ENCODE measurements at regions of chr7 and their contacts with region 1.

Region 1: DNA sequence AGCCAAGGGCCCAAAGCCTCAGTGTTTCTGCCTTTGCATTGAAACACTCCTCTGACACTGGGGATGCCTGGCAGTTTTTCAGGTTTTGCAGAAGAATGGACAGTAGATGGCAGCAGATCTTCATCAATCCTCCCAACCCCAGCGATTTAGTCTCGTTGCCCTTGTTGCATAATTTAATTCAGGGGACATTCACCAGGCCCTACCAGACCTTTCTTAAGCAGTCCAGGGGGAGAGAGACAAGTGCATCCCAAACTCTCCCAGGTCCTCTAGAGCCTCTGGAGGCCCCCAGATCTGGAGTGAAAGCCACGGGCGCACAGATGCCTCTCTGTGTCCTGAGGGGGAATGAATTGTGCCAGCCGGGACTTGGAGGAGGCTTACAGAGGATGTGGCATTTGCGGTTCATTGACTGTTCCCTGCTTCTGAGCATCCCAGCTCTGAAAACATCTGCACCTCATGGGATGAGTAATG is 29.6 kb downstream of the MINDY4 start:
- DNase-seq: peak in 1 of 2 donors; percentile 25
- ATAC-seq: peak; percentile 72 to 93 (median 80)
- H3K4me3 ChIP-seq: no peak overlapping the region
- H3K27ac ChIP-seq: no peak overlapping the region
- H3K4me1 ChIP-seq: peaks cover 25% of the 10 kb centered on the region
- H3K27me3 ChIP-seq: no peaks in the 10 kb centered on the region
- CTCF ChIP-seq: peak; percentile 73

Region 2: GRCh38 chr7:30931161-30931928 is 130.5 kb after region 1 on chr7:
- intact Hi-C with region 1: loop called in 1 of 2 experiments (anchors 5 kb)
- DNase-seq: peak; percentile 54 to 70
- ATAC-seq: peak; percentile 71 to 85 (median 78)
- H3K4me3 ChIP-seq: peak overlapping the region; percentile 27
- H3K27ac ChIP-seq: peak overlapping the region; percentile 36
- H3K4me1 ChIP-seq: peaks cover 19% of the 10 kb centered on the region
- H3K27me3 ChIP-seq: no peaks in the 10 kb centered on the region
- CTCF ChIP-seq: no peak

Region 3: GRCh38 chr7:30974605-30975255 is 173.9 kb after region 1 on chr7:
- intact Hi-C with region 1: loop called (anchors 1 to 5 kb)
- DNase-seq: peak in 1 of 2 donors; percentile 46
- ATAC-seq: peak; percentile 73 to 81 (median 74)
- H3K4me3 ChIP-seq: no peak overlapping the region
- H3K27ac ChIP-seq: no peak overlapping the region
- H3K4me1 ChIP-seq: no peaks in the 10 kb centered on the region
- H3K27me3 ChIP-seq: peaks cover 0 to 6% (median 3%) of the 10 kb centered on the region in 3 donors
- CTCF ChIP-seq: peak; percentile 60

Region 4: DNA sequence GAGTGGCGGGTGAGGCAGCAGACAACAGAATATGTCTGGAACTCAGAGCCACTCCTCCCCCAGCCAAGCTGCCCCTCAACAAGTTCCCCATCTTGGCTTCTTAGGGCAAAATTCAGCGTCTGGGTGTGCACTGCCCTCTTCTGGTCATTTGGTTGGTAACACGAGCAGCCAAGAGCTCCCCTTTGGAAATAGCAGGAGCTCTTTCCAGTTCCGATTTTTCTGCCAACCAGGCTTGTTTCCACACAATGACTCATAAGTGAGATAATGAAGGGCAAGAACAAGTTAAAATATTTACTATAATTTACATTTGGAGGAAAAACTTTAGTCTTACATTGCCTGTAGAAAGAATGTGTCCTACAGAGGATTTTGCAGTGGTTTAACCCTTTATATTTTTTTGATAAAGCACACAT is 321.8 kb after region 1 on chr7:
- intact Hi-C with region 1: loop called (anchors 2 to 5 kb)
- DNase-seq: peak; percentile 43 to 66
- ATAC-seq: peak; percentile 57 to 85 (median 68)
- H3K4me3 ChIP-seq: no peak overlapping the region
- H3K27ac ChIP-seq: no peak overlapping the region
- H3K4me1 ChIP-seq: no peaks in the 10 kb centered on the region
- H3K27me3 ChIP-seq: no peaks in the 10 kb centered on the region
- CTCF ChIP-seq: peak; percentile 82

Region 5: GRCh38 chr7:31251441-31251840 is 450.6 kb after region 1 on chr7:
- intact Hi-C with region 1: no loop called
- DNase-seq: no peak
- ATAC-seq: no peak
- H3K4me3 ChIP-seq: no peak overlapping the region
- H3K27ac ChIP-seq: no peak overlapping the region
- H3K4me1 ChIP-seq: no peaks in the 10 kb centered on the region
- H3K27me3 ChIP-seq: no peaks in the 10 kb centered on the region
- CTCF ChIP-seq: no peak

Region 6: DNA sequence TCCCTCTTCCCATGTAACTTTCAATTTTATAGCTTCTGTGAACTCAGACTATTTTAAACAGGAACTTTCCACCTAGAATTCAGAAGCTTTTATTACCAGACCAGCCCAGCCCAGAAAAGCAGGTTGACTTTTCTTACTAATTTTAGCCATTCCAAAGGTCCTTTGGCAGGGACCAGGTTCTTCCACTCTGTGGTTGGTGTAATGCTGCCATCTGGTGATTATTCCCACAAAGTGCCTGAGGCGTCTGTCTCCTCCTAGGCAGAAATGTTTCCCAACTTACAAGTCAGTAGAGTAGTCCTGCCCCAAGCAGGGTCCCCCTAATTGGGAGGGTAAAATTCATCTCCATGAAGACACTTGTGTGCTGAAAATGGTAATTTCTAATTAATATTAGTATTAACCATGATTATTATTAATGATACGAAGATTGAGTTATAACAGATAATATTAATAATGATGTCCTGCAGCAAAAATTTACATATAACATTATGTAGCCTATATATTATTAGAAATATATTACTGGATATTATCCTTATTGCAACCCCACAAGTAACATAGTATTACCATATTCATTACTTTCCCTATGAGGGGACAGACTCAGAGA is 833.2 kb after region 1 on chr7:
- intact Hi-C with region 1: loop called in 1 of 2 experiments (anchors 10 kb)
- DNase-seq: peak in 1 of 2 donors; percentile 12
- ATAC-seq: peak; percentile 67 to 90 (median 72)
- H3K4me3 ChIP-seq: no peak overlapping the region
- H3K27ac ChIP-seq: no peak overlapping the region
- H3K4me1 ChIP-seq: no peaks in the 10 kb centered on the region
- H3K27me3 ChIP-seq: no peaks in the 10 kb centered on the region
- CTCF ChIP-seq: peak; percentile 55